Dorsolateral prefrontal cortex (tissue), 120 donors: ENCODE measurements at regions of chr3 and their contacts with region 1.

Region 1: DNA sequence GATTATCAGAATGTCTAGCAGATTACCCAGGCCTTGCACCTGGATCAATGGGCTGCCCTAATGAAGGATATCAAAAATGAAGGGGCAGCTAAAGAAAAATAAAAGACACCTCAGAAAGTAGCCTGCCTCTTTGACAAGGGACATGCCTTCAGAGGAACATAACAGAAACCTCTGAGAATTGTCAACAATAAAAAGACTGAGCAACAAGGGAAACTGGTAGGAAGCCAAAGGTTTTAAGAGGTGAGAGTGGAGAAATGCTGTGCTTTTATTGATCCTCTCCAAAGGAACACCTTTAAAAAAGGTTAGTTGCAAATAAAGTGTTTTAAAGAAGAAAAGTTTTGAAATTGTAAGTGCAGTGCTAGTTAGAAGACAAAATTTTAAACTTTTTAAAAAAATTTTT is 187.8 kb upstream of the TTC14 start:
- DNase-seq: no peak
- H3K4me3 ChIP-seq: no peak overlapping the region
- H3K27ac ChIP-seq: no peak overlapping the region
- H3K27me3 ChIP-seq: no peaks in the 10 kb centered on the region
- CTCF ChIP-seq: no peak

Region 2: DNA sequence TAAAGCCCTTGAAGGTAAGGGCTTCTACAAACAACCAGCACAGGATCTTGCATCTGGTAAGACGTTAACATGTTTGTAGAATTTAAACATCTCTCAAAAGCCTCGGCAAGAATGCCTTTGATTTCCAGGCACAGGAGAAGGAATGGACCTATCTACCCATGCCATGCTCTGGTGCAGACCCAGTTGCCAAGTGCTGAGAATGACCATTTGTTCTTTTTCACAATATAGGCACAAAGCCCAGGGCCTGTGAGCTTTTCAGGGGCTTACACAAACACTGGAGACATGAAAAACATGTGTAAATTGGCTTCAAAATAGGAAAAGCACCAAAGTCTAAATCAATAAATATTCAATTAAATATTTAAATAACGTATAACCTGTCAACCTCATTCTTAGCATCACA is 79.1 kb before region 1 on chr3:
- intact Hi-C with region 1: loop called in 1 of 2 experiments (anchors 2 kb)
- DNase-seq: peak in 3 of 10 donors; percentile 37 to 58 (median 43)
- H3K4me3 ChIP-seq: peak overlapping the region in 6 of 59 donors; percentile 3 to 22 (median 5)
- H3K27ac ChIP-seq: peak overlapping the region in 28 of 59 donors; percentile 5 to 76 (median 54)
- H3K27me3 ChIP-seq: no peaks in the 10 kb centered on the region
- CTCF ChIP-seq: peak in 3 of 56 donors; percentile 8 to 26 (median 10)

Region 3: GRCh38 chr3:180457225-180457624 is 43.1 kb after region 1 on chr3:
- intact Hi-C with region 1: no loop called
- DNase-seq: no peak
- H3K4me3 ChIP-seq: no peak overlapping the region
- H3K27ac ChIP-seq: no peak overlapping the region
- H3K27me3 ChIP-seq: no peaks in the 10 kb centered on the region
- CTCF ChIP-seq: no peak

Region 4: GRCh38 chr3:181174834-181175233 is 760.7 kb after region 1 on chr3:
- intact Hi-C with region 1: no loop called
- DNase-seq: no peak
- H3K4me3 ChIP-seq: peak overlapping the region in 6 of 59 donors; percentile 4 to 22 (median 9)
- H3K27ac ChIP-seq: peak overlapping the region in 4 of 59 donors; percentile 5 to 32 (median 8)
- H3K27me3 ChIP-seq: peaks cover 0 to under 1% (median 0%) of the 10 kb centered on the region in 45 donors
- CTCF ChIP-seq: peak in 1 of 56 donors; percentile 15